Lower leg skin (tissue), 4 donors: ENCODE measurements at regions of chr12 and their contacts with region 1.

Region 1: DNA sequence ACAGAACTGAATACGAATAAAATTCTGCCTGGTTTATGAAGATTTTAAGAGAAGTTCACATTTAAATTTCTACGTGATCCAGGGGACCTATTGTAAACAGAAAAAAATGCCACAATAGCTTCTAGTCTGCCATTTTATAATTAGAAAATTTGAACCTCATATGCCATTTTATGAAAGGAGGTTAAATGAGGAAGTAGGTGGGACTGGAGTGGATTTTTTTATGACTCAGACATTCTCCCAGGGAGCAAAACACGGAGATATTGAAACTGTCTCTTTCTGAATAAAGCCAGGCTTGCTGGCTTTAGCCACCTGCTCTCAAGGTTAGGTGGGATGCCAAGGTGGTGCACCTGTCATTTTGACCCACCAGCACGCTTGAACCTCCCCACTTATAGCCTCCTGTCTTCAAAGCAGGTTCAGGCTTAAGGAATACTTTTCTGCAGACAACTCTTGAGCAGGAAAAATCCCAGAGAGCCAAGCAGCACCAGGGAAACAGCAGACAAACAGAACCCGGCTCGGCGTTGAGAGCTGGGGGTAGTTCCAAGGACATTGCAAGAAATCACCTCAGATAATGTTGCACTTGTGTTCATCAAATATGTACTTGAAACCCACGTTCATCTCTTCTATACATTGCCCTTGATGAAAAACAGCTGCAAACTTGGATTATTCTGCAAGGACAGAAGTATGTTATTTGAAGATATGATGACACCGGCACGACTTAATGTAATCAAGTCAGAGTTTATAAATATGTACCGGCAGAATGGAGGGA is 203.7 kb downstream of the PPM1H start:
- DNase-seq: peak in 1 of 2 donors; percentile 40
- H3K4me3 ChIP-seq: no peak overlapping the region
- CTCF ChIP-seq: no peak
- POLR2A ChIP-seq: no peak

Region 2: GRCh38 chr12:62603061-62603810 is 128.0 kb before region 1 on chr12:
- intact Hi-C with region 1: loop called (anchors 10 kb)
- DNase-seq: peak; percentile 78 to 96
- H3K4me3 ChIP-seq: peak overlapping the region; percentile 83
- CTCF ChIP-seq: no peak
- POLR2A ChIP-seq: no peak

Region 3: GRCh38 chr12:62919838-62920237 is 188.6 kb after region 1 on chr12:
- intact Hi-C with region 1: no loop called
- DNase-seq: no peak
- H3K4me3 ChIP-seq: no peak overlapping the region
- CTCF ChIP-seq: no peak
- POLR2A ChIP-seq: no peak